ENCODE measurements at regions of chr1 and their contacts with region 1.

Region 1: GRCh38 chr1:155208541-155209311 is at the start of gene MTX1:
- DNase-seq: peak; percentile 87 to 96 (median 93)
- H3K4me3 ChIP-seq: peak within 1 kb of the TSS; percentile 81 to 100 (median 90)
- H3K27ac ChIP-seq: peak within 1 kb of the TSS; percentile 98 to 99
- H3K4me1 ChIP-seq: peaks cover 16 to 33% (median 31%) of the 10 kb centered on the region in 4 experiments
- H3K27me3 ChIP-seq: no peaks in the 10 kb centered on the region

Region 2: GRCh38 chr1:155172732-155173477 is 35.8 kb before region 1 on chr1 and contains the start of gene KRTCAP2:
- CTCF ChIA-PET with region 1: interaction called, 28 read pairs
- POLR2A ChIA-PET with region 1: interaction called, 3 read pairs
- DNase-seq: peak; percentile 95 to 97 (median 96)
- H3K4me3 ChIP-seq: peak within 1 kb of the TSS; percentile 77 to 95 (median 88)
- H3K27ac ChIP-seq: peak within 1 kb of the TSS; percentile 84 to 93
- H3K4me1 ChIP-seq: peaks cover 0 to 47% (median 41%) of the 10 kb centered on the region in 4 experiments
- H3K27me3 ChIP-seq: no peaks in the 10 kb centered on the region

Region 3: DNA sequence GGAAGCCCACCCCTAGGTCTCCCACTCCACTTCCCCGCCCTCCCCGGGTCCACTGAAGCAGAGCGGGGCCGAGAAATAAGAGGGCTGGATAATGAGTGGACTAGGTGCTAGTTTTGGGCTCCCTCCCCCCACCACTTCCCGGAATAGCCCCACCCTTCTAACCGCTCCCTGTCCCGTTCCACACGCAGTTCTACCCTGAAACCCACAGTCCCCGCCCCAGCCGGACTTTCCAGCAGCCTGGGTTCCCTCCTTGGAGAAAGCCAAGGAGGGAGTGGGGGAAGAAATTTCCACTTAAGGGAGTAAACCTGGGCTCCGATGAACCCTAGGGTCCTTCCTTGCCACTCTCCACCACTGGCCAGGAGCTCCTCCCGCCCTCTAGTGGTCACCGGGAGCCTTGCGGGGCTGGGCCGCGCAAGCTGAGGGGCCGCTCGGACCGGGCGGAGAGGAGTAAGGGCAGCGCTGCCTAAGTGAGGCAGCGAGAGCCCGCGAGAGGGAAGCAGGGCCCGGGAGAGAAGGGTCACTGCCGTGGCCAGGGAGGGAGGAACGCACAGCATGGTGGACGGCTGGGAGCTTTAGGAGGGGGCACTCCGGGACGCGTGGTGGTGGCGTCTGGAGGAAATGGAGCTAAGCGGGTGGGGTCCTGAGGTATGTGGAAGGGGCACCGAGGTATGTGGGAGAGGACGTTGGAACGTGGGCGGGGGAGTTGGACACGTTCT is 15.3 kb before region 1 on chr1:
- CTCF ChIA-PET with region 1: interaction called, 56 read pairs
- POLR2A ChIA-PET with region 1: interaction called, 3 read pairs
- DNase-seq: peak; percentile 79 to 84 (median 81)
- H3K4me3 ChIP-seq: peak overlapping the region; percentile 51 to 86 (median 74)
- H3K27ac ChIP-seq: peak overlapping the region; percentile 66 to 84
- H3K4me1 ChIP-seq: peaks cover 0 to 35% (median 32%) of the 10 kb centered on the region in 4 experiments
- H3K27me3 ChIP-seq: no peaks in the 10 kb centered on the region

Region 4: GRCh38 chr1:155218854-155219591 is 10.3 kb after region 1 on chr1:
- CTCF ChIA-PET with region 1: interaction called, 59 read pairs
- POLR2A ChIA-PET with region 1: no interaction called
- DNase-seq: peak; percentile 38 to 77 (median 73)
- H3K4me3 ChIP-seq: peak overlapping the region in 5 of 7 experiments; percentile 13 to 58 (median 28)
- H3K27ac ChIP-seq: peak overlapping the region in 1 of 2 experiments; percentile 43
- H3K4me1 ChIP-seq: peaks cover 13 to 33% (median 21%) of the 10 kb centered on the region in 4 experiments
- H3K27me3 ChIP-seq: no peaks in the 10 kb centered on the region

Region 5: DNA sequence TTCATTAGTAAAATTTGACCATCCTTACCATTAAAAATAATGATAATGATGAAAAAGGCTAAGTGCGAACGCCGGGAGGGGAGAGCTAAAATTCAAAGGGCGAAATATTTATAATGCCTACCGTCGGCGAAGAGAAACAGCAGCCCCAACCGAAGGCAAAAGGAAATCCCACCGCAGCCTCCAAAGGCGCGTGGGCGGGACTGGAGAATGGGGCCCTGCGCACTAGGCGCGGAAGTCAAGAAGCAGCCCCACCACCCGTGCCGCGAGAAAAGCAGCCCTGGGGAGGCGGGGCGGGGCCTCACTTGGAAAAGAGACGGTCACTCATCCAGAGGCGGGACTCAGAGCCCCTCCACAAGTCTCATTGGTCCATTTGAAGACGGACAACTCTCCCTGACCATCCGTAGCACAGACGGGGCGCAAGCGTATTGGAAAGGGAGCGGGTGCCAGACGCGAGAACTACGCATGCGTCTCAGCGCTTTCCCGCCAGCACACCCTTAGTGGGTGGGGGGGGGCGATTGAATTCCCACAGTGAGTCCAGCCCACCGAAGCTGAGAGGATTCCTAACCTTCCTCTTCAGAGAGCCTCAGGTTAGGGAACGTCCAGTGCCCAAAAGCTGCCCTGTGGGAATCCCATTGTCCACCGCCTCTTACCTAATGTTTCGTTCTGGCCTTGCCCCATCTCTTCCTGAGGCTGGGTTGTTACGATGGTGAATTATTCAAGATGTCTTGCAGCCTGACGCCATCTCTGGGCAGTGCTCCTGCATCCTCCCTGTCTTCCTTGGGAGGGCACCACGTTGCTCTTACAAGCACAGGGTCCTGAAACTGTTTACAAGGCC is 18.8 kb after region 1 on chr1:
- CTCF ChIA-PET with region 1: interaction called, 59 read pairs
- POLR2A ChIA-PET with region 1: interaction called, 8 read pairs
- DNase-seq: peak; percentile 96 to 100 (median 99)
- H3K4me3 ChIP-seq: peak overlapping the region in 6 of 7 experiments; percentile 68 to 85 (median 76)
- H3K27ac ChIP-seq: peak overlapping the region; percentile 74 to 85
- H3K4me1 ChIP-seq: peaks cover 8 to 43% (median 37%) of the 10 kb centered on the region in 4 experiments
- H3K27me3 ChIP-seq: no peaks in the 10 kb centered on the region

Region 6: GRCh38 chr1:155244368-155245162 is 35.8 kb after region 1 on chr1:
- CTCF ChIA-PET with region 1: interaction called, 15 read pairs
- POLR2A ChIA-PET with region 1: no interaction called
- DNase-seq: peak; percentile 99 to 100 (median 100)
- H3K4me3 ChIP-seq: peak overlapping the region; percentile 28 to 79 (median 74)
- H3K27ac ChIP-seq: peak overlapping the region; percentile 33 to 77
- H3K4me1 ChIP-seq: peaks cover 6 to 41% (median 32%) of the 10 kb centered on the region in 4 experiments
- H3K27me3 ChIP-seq: no peaks in the 10 kb centered on the region

Region 7: DNA sequence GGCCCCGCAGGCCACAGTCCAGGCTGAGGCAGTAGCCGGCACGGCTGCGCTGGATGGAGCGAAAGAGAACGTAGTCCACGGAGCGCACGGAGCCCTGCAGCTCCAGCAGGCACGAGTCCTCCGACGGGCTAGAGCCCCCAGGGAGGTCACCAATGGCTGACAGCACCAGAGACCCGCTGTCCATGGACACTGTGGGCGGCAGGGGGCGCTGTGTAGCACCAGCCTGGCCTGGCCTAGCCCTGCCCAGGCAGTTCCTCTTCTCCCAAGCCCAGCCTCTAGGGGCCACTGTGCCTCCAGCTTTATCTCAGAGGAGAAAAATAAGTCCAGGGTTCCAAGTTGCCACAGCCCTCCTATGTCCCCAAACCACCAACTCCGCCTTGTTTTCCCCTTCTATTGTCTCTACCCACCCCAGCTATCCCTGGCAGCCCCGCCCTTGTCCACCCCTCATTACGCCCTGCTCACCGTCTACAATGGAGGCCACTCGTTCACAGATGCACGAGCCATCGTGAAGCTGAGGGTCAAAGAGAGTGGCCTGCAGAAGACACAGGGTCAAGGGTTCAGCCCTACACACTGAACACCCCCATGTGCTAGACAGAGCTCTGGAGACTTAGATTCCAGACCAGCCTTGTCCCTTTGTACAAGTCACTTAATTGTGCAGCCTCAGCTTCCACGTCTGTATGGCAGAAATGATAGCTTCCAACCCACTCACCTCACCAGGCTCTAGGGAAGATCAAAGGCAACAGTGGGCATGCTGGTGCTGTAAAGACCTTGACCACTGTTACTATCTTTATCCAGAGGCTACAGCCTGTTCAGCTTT is 42.1 kb after region 1 on chr1:
- CTCF ChIA-PET with region 1: interaction called, 15 read pairs
- POLR2A ChIA-PET with region 1: interaction called, 5 read pairs
- DNase-seq: peak; percentile 95 to 98 (median 97)
- H3K4me3 ChIP-seq: peak overlapping the region; percentile 32 to 90 (median 71)
- H3K27ac ChIP-seq: peak overlapping the region in 1 of 2 experiments; percentile 66
- H3K4me1 ChIP-seq: peaks cover 0 to 44% (median 30%) of the 10 kb centered on the region in 4 experiments
- H3K27me3 ChIP-seq: no peaks in the 10 kb centered on the region

Measured in common myeloid progenitor, CD34-positive (primary cell).